ENCODE measurements at regions of chr14 and their contacts with region 1.

Region 1: DNA sequence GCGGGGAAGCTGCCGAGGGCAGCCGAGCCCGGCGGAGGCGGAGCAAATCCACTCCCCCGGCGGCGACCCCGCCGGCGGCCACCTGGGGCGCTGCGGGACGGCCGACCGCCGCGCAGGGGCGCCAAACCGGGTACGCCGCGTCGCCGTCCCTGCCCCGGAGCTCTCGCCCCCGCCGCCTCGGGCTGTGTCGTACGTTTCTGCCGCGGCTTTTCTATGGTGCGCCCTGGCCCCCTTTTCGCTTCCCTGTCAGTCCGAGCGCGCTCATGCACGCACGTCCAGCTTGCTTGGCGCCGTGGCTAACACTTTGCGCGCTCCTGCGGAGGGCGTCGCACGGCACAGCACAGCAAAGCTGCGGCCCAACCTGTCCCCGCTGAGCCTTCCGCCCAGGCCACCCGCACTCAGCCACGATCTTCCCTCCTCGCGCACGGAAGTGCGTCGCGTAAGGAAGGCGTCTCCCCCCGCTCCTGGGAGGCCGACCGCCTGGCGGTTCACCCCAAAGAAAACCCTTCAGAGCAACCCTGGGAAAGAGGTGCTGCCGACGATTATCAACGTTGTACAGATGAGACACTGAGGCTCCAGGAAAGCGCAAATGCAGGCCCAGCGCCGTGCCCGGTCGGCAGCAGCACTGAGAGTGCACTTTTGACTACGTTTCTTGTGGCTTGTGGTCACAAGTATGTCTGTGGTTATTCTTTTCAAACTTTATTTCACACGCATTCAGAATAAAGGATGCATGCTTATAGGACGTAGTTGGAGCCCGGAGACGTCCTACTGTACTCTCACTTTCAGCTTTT is at the start of gene HECTD1:
- DNase-seq: peak; percentile 96
- H3K4me3 Mint-ChIP-seq: peak within 1 kb of the TSS; percentile 86
- H3K27ac Mint-ChIP-seq: peak within 1 kb of the TSS; percentile 100
- H3K4me1 Mint-ChIP-seq: peaks cover 32% of the 10 kb centered on the region
- H3K27me3 Mint-ChIP-seq: no peaks in the 10 kb centered on the region
- total RNA-seq, gene HECTD1: 116 TPM in 2 replicates

Region 2: GRCh38 chr14:30621940-30622830 is 585.8 kb before region 1 on chr14 and contains the start of gene SCFD1:
- intact Hi-C with region 1: loop called (anchors 5 kb)
- DNase-seq: peak; percentile 99
- H3K4me3 Mint-ChIP-seq: peak within 1 kb of the TSS; percentile 87
- H3K27ac Mint-ChIP-seq: peak within 1 kb of the TSS; percentile 95
- H3K4me1 Mint-ChIP-seq: peaks cover 32% of the 10 kb centered on the region
- H3K27me3 Mint-ChIP-seq: no peaks in the 10 kb centered on the region
- total RNA-seq, gene SCFD1: 75.3 and 81.0 TPM in 2 replicates

Region 3: DNA sequence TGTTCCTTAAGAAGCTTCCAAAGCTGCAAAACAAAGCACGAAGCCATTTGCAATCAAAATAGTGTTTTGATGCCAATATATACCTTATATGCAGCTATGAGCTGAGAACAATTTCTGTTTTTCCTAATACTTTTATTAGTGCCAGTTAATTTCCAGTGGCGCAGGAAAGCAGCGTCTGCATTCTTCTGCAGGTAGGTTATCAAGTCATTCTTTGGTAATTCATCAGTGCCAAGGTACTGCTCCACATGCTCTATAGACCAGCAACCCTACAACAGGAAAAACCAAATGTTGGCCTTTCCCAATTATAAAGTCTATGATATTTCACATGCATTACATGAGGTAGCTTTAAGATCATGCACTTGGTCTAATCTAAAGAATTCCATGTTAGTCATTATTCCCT is 94.2 kb before region 1 on chr14:
- intact Hi-C with region 1: no loop called
- DNase-seq: no peak
- H3K4me3 Mint-ChIP-seq: no peak overlapping the region
- H3K27ac Mint-ChIP-seq: no peak overlapping the region
- H3K4me1 Mint-ChIP-seq: peaks cover 2% of the 10 kb centered on the region
- H3K27me3 Mint-ChIP-seq: no peaks in the 10 kb centered on the region

Region 4: GRCh38 chr14:31127690-31128089 is 80.3 kb before region 1 on chr14:
- intact Hi-C with region 1: loop called (anchors 1 kb)
- DNase-seq: peak; percentile 88
- H3K4me3 Mint-ChIP-seq: peak overlapping the region; percentile 14
- H3K27ac Mint-ChIP-seq: peak overlapping the region; percentile 59
- H3K4me1 Mint-ChIP-seq: peaks cover 31% of the 10 kb centered on the region
- H3K27me3 Mint-ChIP-seq: no peaks in the 10 kb centered on the region

Region 5: DNA sequence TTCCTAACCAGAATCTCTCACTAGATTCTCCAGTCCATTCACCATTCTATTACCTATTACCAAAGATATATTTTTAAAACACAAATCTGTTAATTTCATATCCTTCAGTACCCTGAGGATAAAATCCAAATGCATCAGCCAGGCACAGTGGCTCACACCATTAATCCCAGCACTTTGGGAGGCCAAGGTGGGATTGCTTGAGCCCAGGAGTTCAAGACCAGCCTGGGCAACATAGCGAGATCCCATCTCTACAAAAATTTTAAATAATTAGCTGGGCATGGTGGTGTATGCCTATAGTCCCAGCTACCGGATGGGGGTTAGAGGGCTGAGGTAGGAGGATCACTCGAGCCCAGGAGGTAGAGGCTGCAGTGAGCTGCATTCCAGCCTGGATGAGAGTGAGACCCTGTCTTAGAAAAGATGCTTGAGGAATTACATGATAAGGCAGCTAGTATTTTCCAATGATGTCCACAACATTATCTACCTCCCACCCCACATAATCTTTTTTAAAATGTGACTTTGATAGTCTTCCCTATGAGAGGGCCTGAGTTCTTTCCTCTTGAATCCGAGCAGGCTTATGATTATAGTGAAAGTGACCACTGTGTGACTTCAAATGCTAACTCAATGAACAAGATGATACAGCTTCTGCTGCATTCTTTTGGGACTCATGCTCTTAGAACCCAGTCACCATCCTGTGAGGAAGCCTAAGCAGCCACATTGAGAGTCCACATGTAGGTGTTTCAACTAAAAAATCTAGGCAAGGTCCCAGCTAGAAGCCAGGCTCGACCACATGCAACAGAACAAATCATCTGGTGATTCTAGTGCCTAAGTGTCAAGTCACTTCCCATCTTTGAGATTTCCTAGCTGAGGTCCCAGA is 18.4 kb before region 1 on chr14:
- intact Hi-C with region 1: no loop called
- DNase-seq: no peak
- H3K4me3 Mint-ChIP-seq: no peak overlapping the region
- H3K27ac Mint-ChIP-seq: no peak overlapping the region
- H3K4me1 Mint-ChIP-seq: peaks cover 20% of the 10 kb centered on the region
- H3K27me3 Mint-ChIP-seq: no peaks in the 10 kb centered on the region

Region 6: GRCh38 chr14:31270196-31270772 is 62.3 kb after region 1 on chr14:
- intact Hi-C with region 1: loop called (anchors 5 kb)
- DNase-seq: peak; percentile 68
- H3K4me3 Mint-ChIP-seq: no peak overlapping the region
- H3K27ac Mint-ChIP-seq: no peak overlapping the region
- H3K4me1 Mint-ChIP-seq: peaks cover 5% of the 10 kb centered on the region
- H3K27me3 Mint-ChIP-seq: no peaks in the 10 kb centered on the region

Region 7: GRCh38 chr14:31388687-31389413 is 180.9 kb after region 1 on chr14:
- intact Hi-C with region 1: loop called (anchors 5 kb)
- DNase-seq: no peak
- H3K4me3 Mint-ChIP-seq: peak overlapping the region; percentile 42
- H3K27ac Mint-ChIP-seq: peak overlapping the region; percentile 83
- H3K4me1 Mint-ChIP-seq: peaks cover 23% of the 10 kb centered on the region
- H3K27me3 Mint-ChIP-seq: no peaks in the 10 kb centered on the region

Region 8: DNA sequence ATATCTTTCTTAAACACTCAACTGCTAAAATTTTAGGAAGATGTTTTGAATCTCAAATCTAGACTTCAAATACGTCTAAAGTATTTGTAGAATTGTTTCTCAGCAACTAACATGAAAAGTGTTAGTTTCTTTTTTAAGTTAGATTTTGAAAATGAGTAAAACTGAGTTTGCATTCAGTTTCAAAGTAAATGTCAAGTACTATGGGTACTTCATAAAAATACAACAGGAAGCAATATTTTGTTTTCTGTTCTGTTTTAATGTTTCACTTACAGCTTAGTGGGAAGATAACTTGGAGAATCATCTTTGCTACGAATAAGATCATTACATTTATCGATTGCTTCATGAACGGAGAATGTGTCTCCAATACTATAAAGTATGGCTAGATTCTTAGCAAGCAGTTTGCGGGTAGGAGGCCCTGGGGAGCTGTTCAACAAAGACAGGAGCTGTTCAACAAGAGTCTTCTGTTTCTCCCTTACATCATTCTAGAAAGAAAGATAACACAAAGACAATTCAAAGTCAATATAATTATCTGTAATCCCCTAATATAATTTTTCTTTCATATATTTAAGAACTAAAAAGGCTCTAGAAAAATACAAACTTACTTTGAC is 192.2 kb after region 1 on chr14:
- intact Hi-C with region 1: no loop called
- DNase-seq: no peak
- H3K4me3 Mint-ChIP-seq: peak overlapping the region; percentile 28
- H3K27ac Mint-ChIP-seq: peak overlapping the region; percentile 80
- H3K4me1 Mint-ChIP-seq: peaks cover 19% of the 10 kb centered on the region
- H3K27me3 Mint-ChIP-seq: no peaks in the 10 kb centered on the region

Region 9: DNA sequence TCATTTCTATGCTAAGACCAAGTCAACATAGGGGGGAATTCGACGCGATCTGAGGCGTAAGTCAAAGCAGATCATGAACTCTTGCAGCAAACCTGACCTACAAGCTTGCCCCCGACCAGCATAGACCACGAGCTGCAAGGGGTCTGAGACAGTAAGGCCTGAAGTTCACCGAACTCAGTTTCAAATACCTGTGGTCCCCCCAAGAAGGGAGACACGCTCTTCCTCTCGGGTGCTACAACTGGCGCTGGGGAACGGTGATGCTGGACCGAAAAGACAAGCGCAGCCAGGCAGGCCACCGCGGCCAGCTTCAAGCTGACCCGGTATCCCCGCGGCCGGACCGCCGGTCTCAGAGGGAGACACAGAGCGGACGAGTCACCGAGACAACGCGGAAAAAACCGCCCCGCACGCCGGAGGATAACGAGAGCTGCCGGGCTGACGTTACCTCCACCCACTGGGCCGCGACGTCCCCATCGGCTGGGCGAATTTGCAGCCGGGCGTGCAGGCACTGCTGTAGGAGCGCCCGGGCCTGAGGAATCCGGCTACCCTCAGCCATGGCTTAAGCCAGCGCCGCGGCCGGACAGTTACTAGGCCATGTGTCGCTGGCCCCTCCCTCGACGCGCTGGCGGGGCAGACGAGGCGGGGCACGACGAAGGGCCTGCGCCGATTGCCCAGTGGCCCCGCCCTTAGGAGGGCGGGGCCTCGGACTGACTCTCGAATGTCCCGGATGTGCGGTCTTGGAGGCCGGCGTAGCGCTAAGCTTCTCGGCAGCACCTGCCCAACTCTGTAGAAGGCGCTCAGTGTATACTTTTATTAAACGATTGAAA is 249.1 kb after region 1 on chr14 and contains the start of gene DTD2:
- intact Hi-C with region 1: loop called (anchors 2 kb)
- DNase-seq: peak; percentile 97
- H3K4me3 Mint-ChIP-seq: peak within 1 kb of the TSS; percentile 95
- H3K27ac Mint-ChIP-seq: peak within 1 kb of the TSS; percentile 98
- H3K4me1 Mint-ChIP-seq: peaks cover 24% of the 10 kb centered on the region
- H3K27me3 Mint-ChIP-seq: peaks cover 4% of the 10 kb centered on the region
- total RNA-seq, gene DTD2: 30.8 and 32.2 TPM in 2 replicates

Region 10: GRCh38 chr14:31622060-31622459 is 414.1 kb after region 1 on chr14:
- intact Hi-C with region 1: no loop called
- DNase-seq: no peak
- H3K4me3 Mint-ChIP-seq: no peak overlapping the region
- H3K27ac Mint-ChIP-seq: no peak overlapping the region
- H3K4me1 Mint-ChIP-seq: no peaks in the 10 kb centered on the region
- H3K27me3 Mint-ChIP-seq: no peaks in the 10 kb centered on the region

Region 11: GRCh38 chr14:32202998-32203882 is 995.3 kb after region 1 on chr14 and contains the start of gene RNU6-8:
- intact Hi-C with region 1: loop called (anchors 5 kb)
- DNase-seq: peak; percentile 95
- H3K4me3 Mint-ChIP-seq: peak within 1 kb of the TSS; percentile 87
- H3K27ac Mint-ChIP-seq: peak within 1 kb of the TSS; percentile 94
- H3K4me1 Mint-ChIP-seq: peaks cover 36% of the 10 kb centered on the region
- H3K27me3 Mint-ChIP-seq: peaks cover 24% of the 10 kb centered on the region
- total RNA-seq, gene RNU6-8: not detected in 2 replicates

Measured in activated CD4-positive, alpha-beta T cell treated with anti-CD3 and anti-CD28 coated beads, Interleukin-2, amount 10 ng/mL, durations not matched to agents 24 days and 14 days (primary cell).